Natural killer cell (primary cell): ENCODE measurements at regions of chr1 and their contacts with region 1.

Region 1: GRCh38 chr1:16440470-16441281 is at the start of gene NECAP2:
- DNase-seq: peak; percentile 95
- ATAC-seq: peak; percentile 86 to 97 (median 92)
- H3K4me3 ChIP-seq: peak within 1 kb of the TSS; percentile 100
- H3K4me3 Mint-ChIP-seq: peak within 1 kb of the TSS; percentile 92
- H3K27ac ChIP-seq: peak within 1 kb of the TSS; percentile 98
- H3K27ac Mint-ChIP-seq: peak within 1 kb of the TSS; percentile 94 to 96
- H3K4me1 ChIP-seq: peaks cover 36% of the 10 kb centered on the region
- H3K4me1 Mint-ChIP-seq: peaks cover 18 to 29% of the 10 kb centered on the region in 2 donors
- H3K27me3 ChIP-seq: no peaks in the 10 kb centered on the region
- H3K27me3 Mint-ChIP-seq: no peaks in the 10 kb centered on the region
- CTCF ChIP-seq: peak; percentile 91
- total RNA-seq, gene NECAP2: 62.1 to 73.1 (median 73.0) TPM

Region 2: DNA sequence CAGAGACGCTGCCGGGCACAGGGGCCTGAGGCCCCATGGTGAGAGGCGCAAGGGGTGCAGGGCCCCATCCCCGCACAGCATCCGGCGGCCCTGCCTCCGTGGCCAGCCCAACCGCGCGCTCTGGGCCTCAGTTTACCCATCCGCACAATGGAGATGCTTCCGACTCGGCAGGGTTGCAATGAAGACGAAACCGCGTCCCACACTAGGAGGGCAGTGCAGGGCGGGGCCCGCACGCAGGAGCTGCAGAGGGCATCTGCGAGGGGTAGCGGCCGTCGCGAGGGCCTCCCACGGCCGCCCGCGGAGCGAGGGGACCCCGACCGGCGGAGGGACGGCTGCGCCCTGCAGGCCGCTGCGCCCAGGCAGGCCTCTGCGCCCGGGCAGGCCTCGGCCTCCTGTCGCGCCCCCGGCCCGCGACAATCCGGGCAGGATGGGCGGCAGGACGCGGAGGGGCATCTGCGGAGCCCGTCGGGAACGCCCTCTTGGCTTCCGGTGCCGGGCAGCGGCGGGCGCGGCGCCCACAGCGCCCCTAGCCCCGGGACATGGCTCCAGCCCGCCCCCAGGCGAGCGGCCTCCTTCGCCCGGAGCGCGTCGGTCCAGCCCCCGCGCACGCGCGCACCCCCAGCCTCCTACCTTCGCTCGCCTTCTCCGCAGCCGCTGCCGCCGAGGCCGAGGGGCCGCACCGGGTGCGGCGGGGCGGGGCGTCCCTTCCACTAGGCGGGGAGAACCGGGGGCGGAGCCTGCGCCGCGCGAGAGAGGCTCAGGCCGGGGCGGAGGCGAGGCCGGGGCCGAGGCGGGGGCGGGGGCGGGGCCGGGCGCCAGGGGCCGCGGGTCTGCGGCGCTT is 58.1 kb after region 1 on chr1:
- intact Hi-C with region 1: loop called (anchors 5 kb)
- DNase-seq: peak; percentile 80 to 90
- ATAC-seq: peak; percentile 94 to 95 (median 94)
- H3K4me3 ChIP-seq: peak overlapping the region; percentile 76
- H3K4me3 Mint-ChIP-seq: peak overlapping the region; percentile 94
- H3K27ac ChIP-seq: peak overlapping the region; percentile 56
- H3K27ac Mint-ChIP-seq: peak overlapping the region; percentile 73 to 83
- H3K4me1 ChIP-seq: peaks cover 27% of the 10 kb centered on the region
- H3K4me1 Mint-ChIP-seq: peaks cover 11 to 33% of the 10 kb centered on the region in 2 donors
- H3K27me3 ChIP-seq: no peaks in the 10 kb centered on the region
- H3K27me3 Mint-ChIP-seq: no peaks in the 10 kb centered on the region
- CTCF ChIP-seq: no peak